ENCODE measurements at regions of chr15 and their contacts with region 1.

Region 1: GRCh38 chr15:40421246-40422157 is 15.9 kb downstream of the IVD start:
- DNase-seq: peak; percentile 92
- ATAC-seq: peak; percentile 94
- H3K4me3 ChIP-seq: no peak overlapping the region
- H3K27ac ChIP-seq: no peak overlapping the region
- H3K4me1 ChIP-seq: peaks cover 20% of the 10 kb centered on the region
- H3K27me3 ChIP-seq: no peaks in the 10 kb centered on the region
- CTCF ChIP-seq: peak; percentile 94

Region 2: DNA sequence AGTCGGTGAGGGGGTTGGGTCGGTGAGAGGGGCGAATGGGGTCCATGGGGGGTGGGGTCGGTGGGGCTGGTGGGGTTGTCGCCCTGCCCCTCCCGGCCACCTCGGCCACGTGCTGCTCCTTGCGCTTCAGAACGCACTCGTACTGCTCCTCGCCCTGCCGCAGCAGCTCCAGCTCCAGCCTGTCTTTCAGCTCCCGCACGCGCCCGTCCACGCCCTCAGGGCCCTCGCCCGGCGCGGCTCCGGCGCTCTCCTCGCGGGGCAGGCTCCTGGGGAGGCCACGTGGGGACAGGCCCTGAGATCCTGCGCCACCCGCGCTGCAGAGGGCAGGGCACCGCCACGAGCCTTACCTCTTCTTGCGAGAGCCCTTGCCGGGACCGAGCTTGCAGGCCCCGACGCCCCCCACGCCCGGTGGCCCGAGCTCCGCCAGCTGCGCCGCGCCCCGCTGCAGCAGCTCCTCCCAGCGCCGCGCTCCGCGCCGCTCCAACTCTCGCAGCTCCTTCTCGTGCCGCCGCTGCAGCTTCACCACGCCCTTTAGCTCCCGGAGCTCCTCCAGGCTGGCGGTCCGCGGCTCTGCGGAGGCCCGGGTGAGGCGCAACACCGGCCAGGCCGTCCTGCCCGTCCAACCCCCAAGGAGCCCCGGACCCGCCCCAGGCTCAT is 130.5 kb before region 1 on chr15:
- intact Hi-C with region 1: no loop called
- DNase-seq: peak; percentile 82
- ATAC-seq: peak; percentile 79
- H3K4me3 ChIP-seq: peak overlapping the region; percentile 25
- H3K27ac ChIP-seq: no peak overlapping the region
- H3K4me1 ChIP-seq: peaks cover 12% of the 10 kb centered on the region
- H3K27me3 ChIP-seq: no peaks in the 10 kb centered on the region
- CTCF ChIP-seq: no peak

Region 3: DNA sequence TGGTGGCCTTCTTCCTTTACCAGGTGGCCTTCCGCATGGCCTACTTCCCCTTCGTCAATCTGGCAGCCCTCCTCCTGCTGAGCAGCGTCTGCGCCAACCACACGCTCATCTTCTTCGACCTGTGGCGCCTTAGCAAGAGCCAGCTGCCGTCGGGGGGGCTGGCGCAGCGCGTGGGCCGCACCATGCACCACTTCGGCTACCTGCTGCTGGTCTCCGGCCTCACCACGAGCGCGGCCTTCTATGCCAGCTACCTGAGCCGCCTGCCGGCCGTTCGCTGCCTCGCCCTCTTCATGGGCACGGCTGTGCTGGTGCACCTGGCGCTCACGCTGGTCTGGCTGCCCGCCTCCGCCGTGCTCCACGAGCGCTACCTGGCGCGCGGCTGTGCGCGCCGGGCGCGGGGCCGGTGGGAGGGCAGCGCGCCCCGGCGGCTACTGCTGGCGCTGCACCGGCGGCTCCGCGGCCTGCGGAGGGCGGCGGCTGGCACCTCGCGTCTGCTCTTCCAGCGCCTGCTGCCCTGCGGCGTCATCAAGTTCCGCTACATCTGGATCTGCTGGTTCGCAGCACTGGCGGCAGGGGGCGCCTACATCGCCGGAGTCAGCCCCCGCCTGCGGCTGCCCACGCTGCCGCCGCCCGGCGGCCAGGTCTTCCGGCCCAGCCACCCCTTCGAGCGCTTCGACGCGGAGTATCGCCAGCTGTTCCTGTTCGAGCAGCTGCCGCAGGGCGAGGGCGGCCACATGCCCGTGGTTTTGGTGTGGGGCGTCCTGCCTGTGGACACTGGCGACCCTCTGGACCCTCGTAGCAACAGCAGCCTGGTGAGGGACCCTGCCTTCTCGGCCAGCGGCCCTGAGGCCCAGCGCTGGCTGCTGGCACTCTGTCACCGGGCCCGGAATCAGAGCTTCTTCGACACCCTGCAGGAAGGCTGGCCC is 53.6 kb before region 1 on chr15:
- intact Hi-C with region 1: loop called (anchors 10 kb)
- DNase-seq: peak; percentile 95
- ATAC-seq: peak; percentile 95
- H3K4me3 ChIP-seq: peak overlapping the region; percentile 48
- H3K27ac ChIP-seq: peak overlapping the region; percentile 47
- H3K4me1 ChIP-seq: peaks cover 15% of the 10 kb centered on the region
- H3K27me3 ChIP-seq: no peaks in the 10 kb centered on the region
- CTCF ChIP-seq: peak; percentile 83